ENCODE measurements at regions of chr21 and their contacts with region 1.

Region 1: DNA sequence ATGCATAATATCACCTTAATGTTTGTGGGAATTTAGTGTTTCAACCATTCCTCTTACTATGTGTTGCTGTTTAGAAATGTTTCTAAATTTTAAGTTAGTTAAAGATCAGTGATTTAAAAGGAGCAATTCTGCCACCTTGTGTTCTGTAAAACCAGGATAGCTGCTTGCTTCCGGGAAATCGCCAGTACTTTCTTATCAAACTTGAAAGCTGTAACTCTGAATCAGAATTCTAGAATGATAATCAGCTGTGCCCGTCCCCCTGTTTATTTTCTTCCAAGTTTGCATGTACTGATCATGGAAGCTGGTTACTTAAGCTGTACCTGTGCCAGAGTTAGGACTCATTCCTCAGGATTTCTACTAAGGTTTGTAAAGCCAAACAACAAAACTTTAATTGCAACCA is 656.4 kb downstream of the LTN1 start:
- DNase-seq: peak in 1 of 5 donors; percentile 18
- ATAC-seq: peak in 3 of 4 donors; percentile 34 to 55 (median 38)
- H3K4me3 ChIP-seq: no peak overlapping the region
- H3K27ac ChIP-seq: peak overlapping the region in 2 of 12 donors; percentile 26 to 34
- H3K4me1 ChIP-seq: peaks cover 0 to 36% (median 8%) of the 10 kb centered on the region in 12 donors
- H3K27me3 ChIP-seq: no peaks in the 10 kb centered on the region
- CTCF ChIP-seq: peak; percentile 19 to 74 (median 57)
- POLR2A ChIP-seq: no peak

Region 2: GRCh38 chr21:27555996-27556395 is 780.3 kb before region 1 on chr21:
- intact Hi-C with region 1: loop called in 1 of 10 experiments (anchors 5 kb)
- DNase-seq: no peak
- ATAC-seq: no peak
- H3K4me3 ChIP-seq: no peak overlapping the region
- H3K27ac ChIP-seq: no peak overlapping the region
- H3K4me1 ChIP-seq: no peaks in the 10 kb centered on the region
- H3K27me3 ChIP-seq: no peaks in the 10 kb centered on the region
- CTCF ChIP-seq: no peak
- POLR2A ChIP-seq: no peak

Region 3: GRCh38 chr21:27700974-27701614 is 635.2 kb before region 1 on chr21:
- intact Hi-C with region 1: loop called in 9 of 10 experiments (anchors 2 to 5 kb)
- DNase-seq: peak; percentile 82 to 88 (median 82)
- ATAC-seq: peak; percentile 61 to 92 (median 88)
- H3K4me3 ChIP-seq: no peak overlapping the region
- H3K27ac ChIP-seq: no peak overlapping the region
- H3K4me1 ChIP-seq: peaks cover 0 to 8% (median 0%) of the 10 kb centered on the region in 12 donors
- H3K27me3 ChIP-seq: no peaks in the 10 kb centered on the region
- CTCF ChIP-seq: peak; percentile 72 to 97 (median 92)
- POLR2A ChIP-seq: no peak

Region 4: GRCh38 chr21:28063241-28064216 is 272.8 kb before region 1 on chr21:
- intact Hi-C with region 1: loop called in 5 of 10 experiments (anchors 5 to 10 kb)
- DNase-seq: no peak
- ATAC-seq: no peak
- H3K4me3 ChIP-seq: no peak overlapping the region
- H3K27ac ChIP-seq: no peak overlapping the region
- H3K4me1 ChIP-seq: peaks cover 0 to 28% (median 8%) of the 10 kb centered on the region in 12 donors
- H3K27me3 ChIP-seq: no peaks in the 10 kb centered on the region
- CTCF ChIP-seq: no peak
- POLR2A ChIP-seq: no peak

Region 5: DNA sequence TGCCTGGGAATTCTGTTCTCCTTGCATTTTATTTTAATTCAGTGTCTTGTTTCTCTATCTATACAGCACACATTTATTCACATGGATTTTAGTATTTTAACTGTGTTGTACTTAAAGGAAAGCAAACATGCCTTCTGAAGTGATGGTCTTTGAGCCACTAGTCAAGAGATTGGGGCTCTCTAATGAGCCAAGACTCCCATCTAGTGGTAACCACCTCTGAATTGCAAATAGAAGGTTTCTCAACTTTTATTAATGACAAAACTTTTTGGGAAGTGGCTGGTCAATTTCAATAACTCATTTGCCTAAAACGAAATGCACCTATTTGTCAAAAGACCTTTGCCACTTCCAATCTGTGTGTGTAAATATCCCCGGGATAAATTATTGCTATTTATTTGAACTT is 456.7 kb after region 1 on chr21:
- intact Hi-C with region 1: loop called in 3 of 10 experiments (anchors 2 to 10 kb)
- DNase-seq: no peak
- ATAC-seq: peak in 2 of 4 donors; percentile 59 to 72
- H3K4me3 ChIP-seq: no peak overlapping the region
- H3K27ac ChIP-seq: no peak overlapping the region
- H3K4me1 ChIP-seq: peaks cover 0 to 12% (median 5%) of the 10 kb centered on the region in 12 donors
- H3K27me3 ChIP-seq: no peaks in the 10 kb centered on the region
- CTCF ChIP-seq: peak in 10 of 12 donors; percentile 38 to 65 (median 54)
- POLR2A ChIP-seq: no peak